Activated CD4-positive, alpha-beta T cell treated with anti-CD3 and anti-CD28 coated beads, Interleukin-2, amount 10 ng/mL, durations not matched to agents 24 days and 14 days (primary cell): ENCODE measurements at regions of chr15 and their contacts with region 1.

Region 1: GRCh38 chr15:97909291-97909891 is 51.1 kb upstream of the ARRDC4 start:
- DNase-seq: peak; percentile 88
- H3K4me3 Mint-ChIP-seq: no peak overlapping the region
- H3K27ac Mint-ChIP-seq: no peak overlapping the region
- H3K4me1 Mint-ChIP-seq: peaks cover under 1% of the 10 kb centered on the region
- H3K27me3 Mint-ChIP-seq: peaks cover 5% of the 10 kb centered on the region

Region 2: GRCh38 chr15:98085003-98085639 is 175.7 kb after region 1 on chr15:
- intact Hi-C with region 1: loop called (anchors 1 kb)
- DNase-seq: peak; percentile 79
- H3K4me3 Mint-ChIP-seq: no peak overlapping the region
- H3K27ac Mint-ChIP-seq: no peak overlapping the region
- H3K4me1 Mint-ChIP-seq: no peaks in the 10 kb centered on the region
- H3K27me3 Mint-ChIP-seq: peaks cover 2% of the 10 kb centered on the region

Region 3: DNA sequence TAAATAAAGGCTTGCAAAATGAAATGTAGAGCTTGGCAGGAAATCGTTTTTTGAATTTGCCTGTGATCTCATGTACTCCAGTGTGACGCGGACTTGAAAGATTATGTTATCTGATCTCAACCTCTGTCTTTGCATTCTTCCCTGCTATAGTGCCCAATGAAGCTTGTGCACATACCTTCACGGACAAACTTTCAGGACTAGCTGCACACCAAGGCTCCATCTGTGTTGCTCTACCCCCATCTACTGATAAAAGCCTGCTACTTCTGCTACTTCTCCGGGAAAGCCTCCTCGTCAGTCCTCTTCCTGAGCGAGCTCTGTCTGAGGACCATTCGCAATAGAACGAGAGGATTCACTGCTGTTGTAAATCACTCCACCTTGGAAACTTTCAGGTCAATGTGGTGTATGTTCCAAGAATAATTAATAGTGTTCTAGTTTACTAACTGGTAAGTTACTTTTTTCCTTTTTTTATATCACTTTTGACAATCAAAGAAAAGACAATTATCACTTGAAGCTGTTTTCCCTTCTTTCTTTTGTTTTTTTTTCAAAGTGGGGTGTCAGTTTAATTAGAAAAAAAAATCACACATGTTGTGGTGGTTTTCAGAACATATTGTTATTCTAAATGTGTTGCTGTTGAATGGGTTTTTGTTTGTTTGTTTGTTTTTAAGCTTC is 268.7 kb after region 1 on chr15:
- intact Hi-C with region 1: loop called (anchors 1 kb)
- DNase-seq: peak; percentile 86
- H3K4me3 Mint-ChIP-seq: no peak overlapping the region
- H3K27ac Mint-ChIP-seq: no peak overlapping the region
- H3K4me1 Mint-ChIP-seq: peaks cover 4% of the 10 kb centered on the region
- H3K27me3 Mint-ChIP-seq: peaks cover 27% of the 10 kb centered on the region

Region 4: DNA sequence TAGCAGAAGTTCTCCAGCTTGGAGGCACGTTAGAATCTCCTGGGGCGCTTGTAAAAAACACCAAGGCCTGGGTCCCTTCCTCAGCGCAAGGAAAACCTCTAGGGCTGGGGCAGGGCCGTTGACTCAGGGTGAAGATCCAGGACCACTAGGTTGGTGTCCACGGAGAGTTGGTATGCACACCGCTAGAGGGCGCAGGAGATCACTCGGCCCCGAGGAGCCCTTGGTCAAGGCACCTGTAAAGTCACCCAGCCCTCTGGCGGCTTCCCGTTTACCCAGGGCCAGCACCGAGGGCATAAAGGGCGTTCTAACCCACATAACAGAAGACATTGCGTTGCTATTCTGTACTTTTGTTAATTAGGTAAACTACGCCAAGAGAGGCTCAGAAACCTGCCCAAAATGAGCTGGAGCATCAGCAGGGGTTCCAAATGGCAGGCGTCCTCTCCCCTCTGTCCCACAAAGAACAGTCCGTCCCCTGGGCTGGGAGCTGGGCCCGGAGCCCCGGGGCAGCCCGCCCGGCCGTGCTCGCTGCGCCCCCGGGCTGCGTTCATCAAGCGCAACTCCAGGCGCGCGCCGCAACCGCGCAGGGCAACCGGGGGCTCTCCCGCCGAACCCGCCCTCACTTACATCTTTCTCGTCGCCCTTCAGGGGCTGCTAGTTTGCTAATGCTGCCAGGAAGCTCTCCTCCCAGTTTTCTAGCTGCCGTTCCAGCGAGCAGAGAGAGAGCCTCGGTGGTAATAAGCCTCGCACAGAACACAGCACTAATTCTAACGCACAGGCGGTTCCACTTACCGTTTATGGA is 383.2 kb after region 1 on chr15:
- intact Hi-C with region 1: loop called (anchors 10 kb)
- DNase-seq: peak; percentile 77
- H3K4me3 Mint-ChIP-seq: no peak overlapping the region
- H3K27ac Mint-ChIP-seq: no peak overlapping the region
- H3K4me1 Mint-ChIP-seq: no peaks in the 10 kb centered on the region
- H3K27me3 Mint-ChIP-seq: peaks cover 24% of the 10 kb centered on the region